ENCODE measurements at regions of chr6 and their contacts with region 1.

Region 1: DNA sequence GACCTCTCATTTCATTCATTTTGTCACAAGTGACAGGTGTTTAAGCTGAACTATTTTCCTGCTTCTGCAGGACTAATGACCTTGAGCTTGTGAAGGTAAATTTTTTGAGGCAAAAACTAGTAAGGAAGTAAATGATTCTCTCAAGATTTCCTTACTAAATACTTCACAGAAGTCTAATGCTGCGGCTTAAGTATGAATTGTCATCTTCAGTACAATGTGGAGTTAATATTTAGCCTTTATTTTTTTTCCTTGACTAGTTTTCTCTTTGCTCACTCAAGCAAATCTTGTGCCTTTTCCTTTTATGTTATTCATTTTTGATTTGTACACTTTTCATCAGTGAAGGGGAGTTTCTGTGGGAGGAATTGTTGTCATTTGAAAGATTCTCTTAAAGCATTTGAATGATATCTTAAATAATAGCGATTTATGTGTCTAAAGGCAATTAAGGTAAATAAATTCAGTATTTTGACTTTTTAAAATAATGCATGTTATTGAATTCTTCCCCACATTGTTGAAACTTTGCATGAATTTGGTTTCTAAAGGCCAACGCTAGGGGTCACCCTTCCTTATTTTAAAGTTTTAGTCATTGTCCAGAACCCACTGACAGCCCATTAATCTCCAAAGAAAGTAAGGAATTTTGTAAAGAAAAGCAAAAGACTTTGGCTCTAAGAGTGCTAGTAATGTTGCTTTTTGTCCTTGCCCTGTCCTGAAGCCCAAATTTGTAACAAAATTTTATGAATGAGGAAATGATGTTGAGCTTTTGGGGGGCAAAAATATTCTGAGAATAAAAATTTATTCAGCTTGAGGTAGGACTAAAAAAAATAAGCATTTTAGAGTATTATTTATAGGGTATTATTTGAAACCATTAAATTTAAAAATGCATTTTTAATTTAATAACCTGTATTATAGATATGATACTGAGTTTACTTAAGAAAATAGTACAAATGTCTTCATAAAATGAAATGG is 157.4 kb upstream of the LAMA2 start:
- DNase-seq: peak; percentile 60
- H3K4me3 ChIP-seq: no peak overlapping the region
- H3K27ac ChIP-seq: no peak overlapping the region
- H3K4me1 ChIP-seq: no peaks in the 10 kb centered on the region
- H3K27me3 ChIP-seq: no peaks in the 10 kb centered on the region

Region 2: GRCh38 chr6:127737009-127737486 is 988.5 kb before region 1 on chr6:
- in situ Hi-C with region 1: loop called (anchors 25 kb)
- DNase-seq: peak; percentile 79
- H3K4me3 ChIP-seq: no peak overlapping the region
- H3K27ac ChIP-seq: no peak overlapping the region
- H3K4me1 ChIP-seq: peaks cover 4% of the 10 kb centered on the region; the same call in 1 of the 2 replicates
- H3K27me3 ChIP-seq: no peaks in the 10 kb centered on the region

Region 3: DNA sequence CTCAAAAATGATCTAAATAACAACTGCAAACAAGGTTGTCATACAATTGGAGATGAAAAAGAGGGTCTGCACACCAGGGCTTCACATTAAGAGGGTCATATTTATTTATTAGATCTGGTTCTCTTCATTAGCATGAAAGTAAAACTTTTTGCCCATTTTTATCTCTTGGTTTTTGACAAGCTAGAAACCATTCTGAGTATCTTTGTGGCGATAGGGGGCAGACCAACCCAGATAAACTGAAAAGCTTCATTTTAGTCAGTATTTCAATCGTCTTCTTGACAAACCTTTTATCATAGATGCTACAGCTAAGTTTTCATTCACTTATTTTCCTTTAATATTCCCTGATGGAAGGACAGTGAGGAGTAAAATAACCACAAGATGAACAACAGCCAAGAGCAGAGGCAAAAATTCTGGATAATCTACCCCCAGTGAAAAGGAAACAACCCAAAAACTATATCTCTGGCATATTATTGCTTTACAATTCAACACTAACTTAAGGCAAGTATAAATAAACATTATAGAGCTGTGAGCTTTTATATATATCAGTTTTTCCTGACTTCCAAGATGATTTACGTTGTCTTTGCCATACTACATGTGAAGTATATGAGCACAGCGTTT is 869.9 kb before region 1 on chr6:
- in situ Hi-C with region 1: loop called (anchors 25 kb)
- DNase-seq: peak; percentile 54
- H3K4me3 ChIP-seq: no peak overlapping the region
- H3K27ac ChIP-seq: no peak overlapping the region
- H3K4me1 ChIP-seq: peaks cover 14% of the 10 kb centered on the region
- H3K27me3 ChIP-seq: no peaks in the 10 kb centered on the region

Measured in GM23248 (cell line).